HepG2 (cell line): ENCODE measurements at regions of chr12 and their contacts with region 1.

Region 1: DNA sequence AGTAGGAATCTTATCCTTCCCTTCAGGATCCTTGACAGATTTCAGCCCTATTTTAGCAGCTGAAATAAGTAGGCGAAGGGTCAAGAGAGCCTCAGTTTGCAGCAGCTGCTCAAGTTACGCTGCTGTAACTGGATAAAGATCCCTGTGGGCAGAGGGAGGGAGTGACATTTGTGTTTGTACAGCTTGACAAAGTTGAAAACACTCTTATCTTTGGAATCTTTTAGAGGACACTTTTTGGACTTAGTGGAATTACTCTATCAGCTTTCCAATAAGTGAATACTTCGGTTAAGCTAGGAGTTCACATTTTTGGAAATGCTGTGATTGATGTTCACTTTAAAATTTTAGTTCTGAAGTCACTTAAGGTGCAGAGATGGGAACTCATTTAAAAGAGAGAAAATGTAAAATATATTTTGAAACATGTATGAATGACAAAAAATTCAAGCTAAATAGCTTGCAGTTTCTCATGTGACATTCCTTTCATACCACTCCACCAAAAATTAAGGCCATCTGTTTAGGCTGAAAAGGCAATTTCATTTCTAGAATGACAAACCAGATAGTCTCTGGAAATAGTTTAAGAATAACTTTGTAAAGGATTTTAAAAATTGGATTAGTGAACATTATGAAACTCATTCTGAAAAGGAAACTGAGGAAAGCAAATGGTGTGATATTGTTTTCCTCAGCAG is 55.2 kb downstream of the SLC38A4 start:
- DNase-seq: peak; percentile 78
- ATAC-seq: peak; percentile 94
- H3K4me3 ChIP-seq: no peak overlapping the region; a peak in 1 of 6 replicates
- H3K27ac ChIP-seq: peak overlapping the region; percentile 64
- H3K4me1 ChIP-seq: peaks cover 59% of the 10 kb centered on the region
- H3K27me3 ChIP-seq: no peaks in the 10 kb centered on the region
- CTCF ChIP-seq: no peak
- EP300 ChIP-seq: peak in 1 of 2 experiments; percentile 75; a peak in 2 of 4 replicates
- POLR2A ChIP-seq: no peak
- RAD21 ChIP-seq: no peak

Region 2: DNA sequence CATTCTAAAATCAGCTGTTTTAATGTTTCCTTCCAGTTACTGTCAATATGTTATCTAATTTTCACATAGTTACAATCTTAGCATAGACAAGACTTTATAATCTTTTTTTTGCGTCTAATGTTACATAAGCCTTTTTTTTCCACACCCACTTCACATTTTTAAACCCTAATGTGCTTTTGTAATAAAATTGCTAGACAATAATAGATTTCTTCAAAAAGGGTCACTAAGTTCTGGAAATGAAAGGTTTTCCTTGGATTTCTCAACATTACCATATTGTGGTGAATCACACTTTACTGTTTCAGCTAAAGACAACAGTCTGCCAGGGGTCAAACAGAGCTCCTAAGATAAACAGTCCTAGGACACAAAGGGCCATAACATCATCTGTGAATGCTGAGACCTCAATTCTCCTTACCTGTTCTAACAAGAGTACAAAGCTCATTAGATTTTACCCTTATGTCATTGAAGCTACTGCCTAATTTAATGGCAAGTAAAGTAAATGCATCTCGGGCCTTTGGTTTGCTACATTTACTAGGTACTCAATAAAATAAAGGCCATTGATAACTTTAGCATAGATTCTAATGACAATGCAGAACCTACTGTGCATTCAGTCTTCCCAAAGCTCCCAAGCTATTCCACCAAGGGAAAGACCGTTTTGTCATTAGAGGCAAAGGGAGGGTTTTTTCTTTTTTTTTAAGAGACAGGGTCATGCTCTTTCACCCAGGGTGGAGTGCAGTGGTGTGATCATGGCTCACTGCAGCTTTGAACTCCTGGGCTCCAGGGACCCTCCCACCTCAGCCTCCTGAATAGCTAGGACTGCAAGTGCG is 286.9 kb before region 1 on chr12:
- CTCF ChIA-PET with region 1: no interaction called
- POLR2A ChIA-PET with region 1: no interaction called
- in situ Hi-C with region 1: no loop called
- intact Hi-C with region 1: no loop called
- DNase-seq: peak; percentile 94
- ATAC-seq: peak; percentile 98
- H3K4me3 ChIP-seq: peak overlapping the region in 1 of 3 experiments; percentile 3; a peak in 1 of 6 replicates
- H3K27ac ChIP-seq: peak overlapping the region; percentile 73
- H3K4me1 ChIP-seq: peaks cover 82% of the 10 kb centered on the region
- H3K27me3 ChIP-seq: no peaks in the 10 kb centered on the region
- CTCF ChIP-seq: no peak
- EP300 ChIP-seq: peak in 1 of 2 experiments; percentile 90; a peak in 2 of 4 replicates
- POLR2A ChIP-seq: no peak
- RAD21 ChIP-seq: no peak

Region 3: DNA sequence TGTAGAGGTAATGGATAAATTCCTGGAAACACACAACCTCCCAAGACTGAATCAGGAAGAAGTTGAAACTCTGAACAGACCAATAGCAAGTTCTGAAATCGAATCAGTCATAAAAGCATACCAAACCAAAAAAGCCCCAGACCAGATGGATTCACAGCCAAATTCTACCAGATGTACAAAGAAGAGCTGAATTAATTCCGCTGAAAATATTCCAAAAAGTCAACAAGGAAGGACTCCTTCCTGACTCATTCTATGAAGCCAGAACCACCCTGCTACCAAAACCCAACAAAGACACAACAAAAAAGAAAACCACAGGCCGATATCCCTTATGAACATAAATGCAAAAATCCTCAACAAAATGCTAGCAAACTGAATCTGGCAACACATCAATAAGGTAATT is 26.4 kb before region 1 on chr12:
- CTCF ChIA-PET with region 1: no interaction called
- POLR2A ChIA-PET with region 1: no interaction called
- in situ Hi-C with region 1: no loop called
- intact Hi-C with region 1: no loop called
- DNase-seq: no peak
- ATAC-seq: no peak
- H3K4me3 ChIP-seq: no peak overlapping the region
- H3K27ac ChIP-seq: no peak overlapping the region
- H3K4me1 ChIP-seq: no peaks in the 10 kb centered on the region
- H3K27me3 ChIP-seq: no peaks in the 10 kb centered on the region
- CTCF ChIP-seq: no peak
- EP300 ChIP-seq: no peak
- POLR2A ChIP-seq: no peak
- RAD21 ChIP-seq: no peak

Region 4: GRCh38 chr12:46825591-46826414 is 55.2 kb after region 1 on chr12 and contains the start of gene SLC38A4:
- CTCF ChIA-PET with region 1: no interaction called
- POLR2A ChIA-PET with region 1: no interaction called
- in situ Hi-C with region 1: no loop called
- intact Hi-C with region 1: loop called (anchors 10 kb)
- DNase-seq: peak; percentile 40
- ATAC-seq: peak; percentile 100
- H3K4me3 ChIP-seq: peak within 1 kb of the TSS; percentile 56 to 74 (median 63)
- H3K27ac ChIP-seq: no peak within 1 kb of the TSS
- H3K4me1 ChIP-seq: peaks cover 42% of the 10 kb centered on the region
- H3K27me3 ChIP-seq: peaks cover 2 to 12% of the 10 kb centered on the region in 2 experiments; a peak in 3 of 5 replicates
- CTCF ChIP-seq: peak; percentile 88
- EP300 ChIP-seq: no peak
- POLR2A ChIP-seq: no peak
- RAD21 ChIP-seq: peak; percentile 76
- total RNA-seq, gene SLC38A4: 2.8 and 3.5 TPM in 2 replicates

Region 5: GRCh38 chr12:46933947-46934346 is 163.3 kb after region 1 on chr12:
- CTCF ChIA-PET with region 1: no interaction called
- POLR2A ChIA-PET with region 1: no interaction called
- in situ Hi-C with region 1: loop called (anchors 10 kb)
- intact Hi-C with region 1: no loop called
- DNase-seq: peak; percentile 49
- ATAC-seq: peak; percentile 87
- H3K4me3 ChIP-seq: peak overlapping the region in 2 of 3 experiments; percentile 14 to 31; a peak in 4 of 6 replicates
- H3K27ac ChIP-seq: no peak overlapping the region
- H3K4me1 ChIP-seq: peaks cover 42% of the 10 kb centered on the region
- H3K27me3 ChIP-seq: no peaks in the 10 kb centered on the region
- CTCF ChIP-seq: peak; percentile 83
- EP300 ChIP-seq: no peak
- POLR2A ChIP-seq: no peak
- RAD21 ChIP-seq: peak; percentile 33; the same call in 1 of the 2 replicates